ENCODE measurements at regions of chr11 and their contacts with region 1.

Region 1: DNA sequence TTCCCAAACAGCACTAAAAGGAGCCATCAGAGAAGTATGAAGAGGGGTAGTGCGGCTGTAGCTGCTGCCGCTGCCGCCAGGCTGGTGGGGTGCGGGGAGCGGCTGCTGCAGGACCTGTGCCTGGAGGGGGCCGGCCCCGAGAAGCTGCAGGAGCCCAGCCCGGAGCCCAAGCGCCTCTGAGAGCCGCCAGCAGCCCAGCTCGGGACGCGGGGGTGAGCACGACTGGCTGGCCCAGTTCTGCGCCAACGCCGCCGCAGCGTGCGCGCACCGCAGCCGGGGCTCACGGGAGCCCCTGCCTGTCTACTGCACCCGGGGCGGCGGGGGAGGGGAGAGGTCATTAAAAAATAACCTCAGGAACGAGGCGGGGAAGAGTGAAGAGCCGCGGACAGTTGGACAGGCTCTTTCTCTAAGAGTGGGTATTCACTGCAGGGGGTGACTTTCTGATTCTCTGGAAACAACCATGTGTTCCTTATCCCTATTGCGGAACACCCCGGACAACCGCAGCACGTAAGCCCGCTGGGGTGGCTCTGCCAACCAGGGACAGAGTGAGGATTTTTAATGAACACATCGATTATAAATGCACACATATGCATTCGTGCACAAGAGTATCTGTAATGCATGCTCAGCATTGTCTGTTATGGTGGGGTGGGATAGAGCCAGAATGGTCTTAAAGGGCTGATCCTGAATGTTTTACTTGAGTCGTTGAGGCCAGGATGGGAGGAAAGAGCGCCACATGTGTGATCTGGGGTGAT is 453 bp downstream of the GAS2 start:
- DNase-seq: no peak
- H3K4me3 Mint-ChIP-seq: peak overlapping the region; percentile 78
- H3K27ac Mint-ChIP-seq: no peak overlapping the region
- H3K4me1 Mint-ChIP-seq: peaks cover 28% of the 10 kb centered on the region
- H3K27me3 Mint-ChIP-seq: peaks cover 45% of the 10 kb centered on the region

Region 2: DNA sequence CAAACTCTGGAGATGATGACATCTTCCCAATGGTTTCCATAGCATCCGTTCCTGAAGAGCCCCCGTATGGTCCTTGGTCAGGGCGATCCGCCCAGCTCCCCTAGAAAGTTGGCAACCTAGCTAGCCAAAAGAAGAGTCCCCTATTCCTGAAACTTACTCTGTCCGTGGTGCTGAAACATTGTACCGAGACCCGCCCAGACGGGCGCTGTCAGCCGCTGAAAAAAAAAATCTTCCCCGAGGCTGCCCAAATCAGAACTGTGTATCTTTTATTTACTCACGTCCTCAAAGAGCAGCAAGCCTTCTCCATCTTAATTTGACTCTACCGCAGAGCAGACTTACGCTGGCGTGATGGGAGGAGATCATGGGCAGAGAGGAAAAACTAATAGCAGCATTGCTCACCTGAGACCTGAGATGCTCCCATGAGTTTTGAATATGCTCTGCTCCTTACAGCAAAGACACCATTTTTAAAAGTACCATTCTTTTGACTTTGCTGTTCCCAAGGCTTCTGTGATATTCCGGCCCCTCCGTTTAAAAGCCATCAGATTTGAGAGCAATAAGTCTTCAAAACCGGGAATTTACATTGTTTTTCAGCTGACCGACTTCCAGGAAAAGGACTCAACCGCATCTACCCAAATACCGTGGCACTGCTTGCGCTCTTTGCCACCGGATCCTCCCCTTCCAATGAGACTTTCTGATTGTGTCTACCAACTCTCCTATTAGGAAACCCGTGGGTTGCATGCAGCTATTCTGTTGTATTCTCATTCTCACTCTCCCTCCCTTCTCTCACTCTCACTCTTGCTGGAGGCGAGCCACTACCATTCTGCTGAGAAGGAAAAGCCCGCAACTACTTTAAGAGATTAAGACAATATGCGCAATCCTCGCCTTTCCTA is 329.0 kb before region 1 on chr11 and contains the start of gene SLC17A6:
- intact Hi-C with region 1: loop called (anchors 10 kb)
- DNase-seq: no peak
- H3K4me3 Mint-ChIP-seq: no peak within 1 kb of the TSS
- H3K27ac Mint-ChIP-seq: no peak within 1 kb of the TSS
- H3K4me1 Mint-ChIP-seq: peaks cover 5% of the 10 kb centered on the region
- H3K27me3 Mint-ChIP-seq: peaks cover 51% of the 10 kb centered on the region
- total RNA-seq, gene SLC17A6: not detected in 2 replicates

Region 3: DNA sequence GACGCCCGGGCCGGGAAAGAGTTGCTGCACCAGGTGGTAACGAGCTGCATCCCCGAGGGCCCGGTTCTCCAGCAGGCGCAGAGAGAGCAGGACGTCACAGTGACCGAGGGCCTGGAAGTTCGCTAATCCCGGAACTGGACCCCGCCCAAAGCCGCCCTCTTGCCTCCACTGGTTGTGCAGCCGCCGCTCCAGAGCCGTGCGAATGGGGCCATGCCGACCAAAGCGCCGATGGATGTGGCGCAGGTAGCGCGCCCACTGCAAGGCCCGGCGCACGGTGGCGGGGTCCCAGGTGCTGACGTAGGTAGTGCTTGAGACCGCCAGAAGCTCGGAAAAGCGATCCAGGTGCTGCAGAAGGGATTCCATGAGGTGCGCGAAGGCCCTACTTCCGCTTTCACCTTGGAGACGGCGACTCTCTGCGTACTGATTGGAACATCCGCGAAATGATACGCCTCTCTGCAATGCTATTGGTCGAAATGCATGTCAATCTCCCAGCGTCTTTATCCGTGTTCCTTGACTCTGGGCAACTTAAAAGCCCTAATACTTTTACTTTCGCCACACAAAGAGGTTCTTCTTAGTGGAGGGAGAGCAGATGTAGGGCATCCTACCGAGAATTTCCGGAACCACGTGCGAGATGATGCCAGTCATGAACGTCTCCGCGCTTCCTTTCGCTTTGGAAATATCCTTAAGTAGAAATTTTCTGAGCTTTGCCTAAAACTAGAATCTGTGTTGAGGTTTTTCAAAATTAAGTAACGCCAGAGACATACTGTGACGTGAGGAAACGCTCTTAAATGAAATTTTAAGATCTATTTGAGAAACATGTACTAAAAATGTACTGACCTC is 41.2 kb before region 1 on chr11 and contains the start of gene FANCF:
- intact Hi-C with region 1: loop called (anchors 2 kb)
- DNase-seq: peak; percentile 92
- H3K4me3 Mint-ChIP-seq: peak within 1 kb of the TSS; percentile 99
- H3K27ac Mint-ChIP-seq: peak within 1 kb of the TSS; percentile 98
- H3K4me1 Mint-ChIP-seq: peaks cover 31% of the 10 kb centered on the region
- H3K27me3 Mint-ChIP-seq: no peaks in the 10 kb centered on the region
- total RNA-seq, gene FANCF: 16.9 and 19.9 TPM in 2 replicates

Region 4: GRCh38 chr11:22703040-22703439 is 36.2 kb after region 1 on chr11:
- intact Hi-C with region 1: loop called (anchors 5 kb)
- DNase-seq: no peak
- H3K4me3 Mint-ChIP-seq: no peak overlapping the region
- H3K27ac Mint-ChIP-seq: peak overlapping the region; percentile 74
- H3K4me1 Mint-ChIP-seq: peaks cover 33% of the 10 kb centered on the region
- H3K27me3 Mint-ChIP-seq: no peaks in the 10 kb centered on the region

Region 5: GRCh38 chr11:22730319-22730718 is 63.5 kb after region 1 on chr11:
- intact Hi-C with region 1: loop called (anchors 1 kb)
- DNase-seq: no peak
- H3K4me3 Mint-ChIP-seq: no peak overlapping the region
- H3K27ac Mint-ChIP-seq: no peak overlapping the region
- H3K4me1 Mint-ChIP-seq: no peaks in the 10 kb centered on the region
- H3K27me3 Mint-ChIP-seq: peaks cover 6% of the 10 kb centered on the region

Region 6: GRCh38 chr11:22787551-22788162 is 120.8 kb after region 1 on chr11:
- intact Hi-C with region 1: loop called (anchors 1 kb)
- DNase-seq: no peak
- H3K4me3 Mint-ChIP-seq: no peak overlapping the region
- H3K27ac Mint-ChIP-seq: no peak overlapping the region
- H3K4me1 Mint-ChIP-seq: no peaks in the 10 kb centered on the region
- H3K27me3 Mint-ChIP-seq: no peaks in the 10 kb centered on the region

Measured in activated T-helper 1 cell treated with anti-CD3 and anti-CD28 coated beads, Interleukin-12 subunit alpha, Interleukin-12 subunit beta, Interleukin-2, Interleukin-4 antibody, amounts not matched to agents 30 ng/mL and 10 ng/mL and 1 ng/mL, durations not matched to agents 14 hours and 24 hours and 36 hours (primary cell).